Gastrocnemius medialis (tissue), 4 donors: ENCODE measurements at regions of chr16 and their contacts with region 1.

Region 1: GRCh38 chr16:55035029-55035428 is 104.4 kb downstream of the IRX5 start:
- DNase-seq: no peak
- ATAC-seq: no peak
- H3K4me3 ChIP-seq: no peak overlapping the region
- H3K27ac ChIP-seq: no peak overlapping the region
- H3K4me1 ChIP-seq: peaks cover 0 to 3% of the 10 kb centered on the region in 2 donors
- H3K27me3 ChIP-seq: no peaks in the 10 kb centered on the region
- CTCF ChIP-seq: peak in 2 of 5 experiments; percentile 13 to 41
- POLR2A ChIP-seq: no peak

Region 2: DNA sequence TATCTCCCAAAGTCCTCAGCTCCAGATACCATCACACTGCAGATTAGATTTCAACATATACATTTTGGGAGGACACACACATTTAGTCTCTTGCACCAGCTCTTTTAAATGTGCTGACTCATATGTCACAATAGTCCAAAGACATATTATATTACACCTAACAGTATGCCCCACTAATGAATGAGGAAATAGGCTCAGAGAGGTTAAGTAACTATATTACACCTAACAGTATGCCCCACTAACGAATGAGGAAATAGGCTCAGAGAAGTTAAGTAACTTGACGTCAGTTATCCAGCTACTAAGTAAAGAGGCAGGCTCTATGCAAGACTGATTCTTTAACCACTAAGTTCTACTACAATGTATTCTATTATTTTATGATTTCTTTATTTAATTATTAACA is 298.7 kb after region 1 on chr16:
- in situ Hi-C with region 1: no loop called
- intact Hi-C with region 1: loop called (anchors 5 kb)
- DNase-seq: no peak
- ATAC-seq: no peak
- H3K4me3 ChIP-seq: no peak overlapping the region
- H3K27ac ChIP-seq: no peak overlapping the region
- H3K4me1 ChIP-seq: no peaks in the 10 kb centered on the region
- H3K27me3 ChIP-seq: peaks cover 18 to 42% (median 29%) of the 10 kb centered on the region in 3 donors
- CTCF ChIP-seq: no peak
- POLR2A ChIP-seq: no peak